ENCODE measurements at regions of chr11 and their contacts with region 1.

Region 1: DNA sequence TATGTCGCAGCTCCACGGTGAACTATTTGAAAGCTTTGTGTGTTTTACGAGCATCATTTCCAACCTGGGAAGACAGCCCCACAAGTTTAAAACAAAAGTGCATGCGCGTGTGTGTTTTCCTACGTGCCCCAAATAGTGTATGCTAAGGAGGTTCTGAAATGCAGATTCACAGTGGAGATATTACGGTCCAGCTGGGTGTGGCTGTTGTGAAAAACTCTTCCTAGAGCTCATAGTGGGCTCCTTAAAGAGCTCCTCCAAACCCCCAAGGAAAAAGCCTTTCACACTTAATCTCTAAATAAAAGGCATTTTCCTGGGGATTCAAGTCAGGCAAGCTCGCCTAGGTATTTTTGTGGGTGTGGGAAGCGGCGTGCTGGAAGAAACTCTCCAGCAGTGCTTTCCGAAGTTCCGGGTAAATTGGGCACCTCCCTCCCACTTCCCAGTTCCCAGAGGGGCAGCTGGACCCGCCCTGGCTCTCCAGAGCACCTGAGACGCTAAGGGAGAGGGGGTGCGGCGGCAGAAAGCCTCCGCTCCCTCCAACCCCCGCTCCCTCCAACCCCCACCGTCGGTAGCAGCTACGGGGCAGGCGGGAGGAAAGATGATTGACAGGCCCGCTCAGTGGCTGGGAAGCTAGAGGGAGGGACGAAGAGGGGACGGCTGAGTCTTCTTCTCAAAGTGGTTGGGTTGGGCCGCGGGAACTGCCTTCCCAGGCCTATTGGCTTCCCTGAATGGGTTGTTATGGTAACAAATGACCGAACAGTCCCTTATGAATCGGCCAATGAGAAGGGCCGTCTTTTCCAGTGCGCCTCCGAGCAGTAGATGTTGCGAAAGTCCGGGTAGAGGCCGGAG is 558 bp upstream of the PCF11 start:
- DNase-seq: peak; percentile 100
- H3K4me3 ChIP-seq: peak overlapping the region; percentile 76 to 93 (median 83)
- H3K27ac ChIP-seq: peak overlapping the region; percentile 57
- H3K4me1 ChIP-seq: peaks cover 23% of the 10 kb centered on the region
- H3K27me3 ChIP-seq: no peaks in the 10 kb centered on the region
- CTCF ChIP-seq: no peak
- POLR2A ChIP-seq: no peak

Region 2: DNA sequence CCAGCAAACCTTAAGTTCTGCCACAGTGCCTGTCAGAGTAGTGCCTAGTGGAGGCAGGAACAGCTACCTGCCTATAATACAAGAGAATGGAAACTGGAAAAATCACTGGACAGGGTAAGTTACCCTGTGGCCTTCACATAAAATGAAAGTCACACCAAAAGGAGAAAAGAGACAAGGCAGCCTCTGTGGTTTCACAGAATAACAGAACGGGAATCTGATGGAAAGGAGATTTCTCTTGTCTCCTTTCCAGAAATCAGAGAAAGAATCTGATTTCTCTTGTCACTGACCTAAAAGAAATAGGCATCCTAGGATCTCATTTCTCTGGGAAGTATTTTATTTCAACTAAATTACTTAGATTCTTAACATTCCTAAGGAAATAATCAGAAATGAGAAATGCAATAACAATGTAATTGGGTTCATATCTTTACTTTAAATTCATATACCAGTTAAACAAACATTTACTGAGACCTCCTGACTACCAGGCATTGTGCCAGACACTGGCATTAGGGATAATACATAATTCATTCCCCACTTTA is 297.7 kb before region 1 on chr11:
- CTCF ChIA-PET with region 1: no interaction called
- POLR2A ChIA-PET with region 1: interaction called, 3 read pairs
- dilution Hi-C with region 1: no loop called
- intact Hi-C with region 1: loop called (anchors 2 kb)
- DNase-seq: peak; percentile 89
- H3K4me3 ChIP-seq: peak overlapping the region in 1 of 3 experiments; percentile 50
- H3K27ac ChIP-seq: peak overlapping the region; percentile 98
- H3K4me1 ChIP-seq: peaks cover 52% of the 10 kb centered on the region
- H3K27me3 ChIP-seq: no peaks in the 10 kb centered on the region
- CTCF ChIP-seq: no peak
- POLR2A ChIP-seq: no peak

Region 3: GRCh38 chr11:82927254-82927880 is 229.0 kb before region 1 on chr11:
- CTCF ChIA-PET with region 1: interaction called, 8 read pairs
- POLR2A ChIA-PET with region 1: no interaction called
- dilution Hi-C with region 1: no loop called
- intact Hi-C with region 1: loop called (anchors 5 kb)
- DNase-seq: peak; percentile 59
- H3K4me3 ChIP-seq: no peak overlapping the region
- H3K27ac ChIP-seq: no peak overlapping the region
- H3K4me1 ChIP-seq: peaks cover 16% of the 10 kb centered on the region
- H3K27me3 ChIP-seq: no peaks in the 10 kb centered on the region
- CTCF ChIP-seq: peak; percentile 59 to 61
- POLR2A ChIP-seq: no peak

Region 4: GRCh38 chr11:83071567-83072349 is 84.6 kb before region 1 on chr11 and contains the start of gene RAB30:
- CTCF ChIA-PET with region 1: interaction called, 4 read pairs
- POLR2A ChIA-PET with region 1: interaction called, 10 read pairs
- dilution Hi-C with region 1: no loop called
- intact Hi-C with region 1: loop called (anchors 1 kb)
- DNase-seq: peak; percentile 100
- H3K4me3 ChIP-seq: peak within 1 kb of the TSS; percentile 78 to 96 (median 93)
- H3K27ac ChIP-seq: peak within 1 kb of the TSS; percentile 75
- H3K4me1 ChIP-seq: peaks cover 36% of the 10 kb centered on the region
- H3K27me3 ChIP-seq: no peaks in the 10 kb centered on the region
- CTCF ChIP-seq: no peak
- POLR2A ChIP-seq: peak; percentile 97
- total RNA-seq, gene RAB30: 14.6 and 18.4 TPM in 2 replicates

Region 5: DNA sequence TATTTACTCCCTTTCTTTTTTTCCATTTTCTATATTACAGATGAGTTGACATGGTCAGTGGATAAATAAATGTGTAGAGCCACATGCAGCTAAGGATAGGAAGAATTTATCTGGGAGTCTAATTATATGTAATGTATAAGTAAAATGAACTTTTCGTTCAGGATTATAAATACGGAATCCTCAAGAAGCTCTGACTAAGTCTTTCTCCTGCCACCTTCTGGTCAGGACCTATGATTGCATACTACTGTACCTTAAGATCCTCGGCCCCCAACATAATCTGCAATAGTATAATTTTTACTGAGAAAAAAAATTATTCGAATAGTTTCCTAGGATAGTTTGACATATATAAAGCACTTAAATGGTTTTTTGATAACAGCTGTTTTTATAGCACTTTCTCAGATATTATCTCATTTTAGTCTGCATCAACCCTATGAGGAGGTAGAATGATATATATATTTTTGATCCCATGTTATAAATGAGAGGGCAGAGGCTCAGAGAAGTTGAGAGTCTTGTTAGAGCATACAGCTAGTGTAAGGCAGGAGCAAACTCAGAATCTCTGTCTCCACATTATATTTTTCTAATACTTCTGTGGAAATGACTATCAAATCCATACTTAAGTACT is 93.7 kb after region 1 on chr11:
- CTCF ChIA-PET with region 1: interaction called, 11 read pairs
- POLR2A ChIA-PET with region 1: no interaction called
- dilution Hi-C with region 1: no loop called
- intact Hi-C with region 1: no loop called
- DNase-seq: peak; percentile 46
- H3K4me3 ChIP-seq: no peak overlapping the region
- H3K27ac ChIP-seq: no peak overlapping the region
- H3K4me1 ChIP-seq: no peaks in the 10 kb centered on the region
- H3K27me3 ChIP-seq: no peaks in the 10 kb centered on the region
- CTCF ChIP-seq: peak; percentile 35 to 53
- POLR2A ChIP-seq: no peak

Measured in endothelial cell of umbilical vein (primary cell).